ENCODE measurements at regions of chr2 and their contacts with region 1.

Region 1: GRCh38 chr2:219402665-219403515 is 15.2 kb upstream of the DNPEP start:
- DNase-seq: peak; percentile 85
- H3K4me3 Mint-ChIP-seq: no peak overlapping the region
- H3K27ac Mint-ChIP-seq: no peak overlapping the region
- H3K4me1 Mint-ChIP-seq: peaks cover 6% of the 10 kb centered on the region
- H3K27me3 Mint-ChIP-seq: no peaks in the 10 kb centered on the region
- CTCF ChIP-seq: peak; percentile 86

Region 2: GRCh38 chr2:219388127-219388844 is 14.6 kb before region 1 on chr2:
- CTCF ChIA-PET with region 1: interaction called, 23 read pairs
- POLR2A ChIA-PET with region 1: interaction called, 6 read pairs
- intact Hi-C with region 1: no loop called
- DNase-seq: peak; percentile 87
- H3K4me3 Mint-ChIP-seq: peak overlapping the region; percentile 96
- H3K27ac Mint-ChIP-seq: peak overlapping the region; percentile 97
- H3K4me1 Mint-ChIP-seq: no peaks in the 10 kb centered on the region
- H3K27me3 Mint-ChIP-seq: no peaks in the 10 kb centered on the region
- CTCF ChIP-seq: no peak

Region 3: DNA sequence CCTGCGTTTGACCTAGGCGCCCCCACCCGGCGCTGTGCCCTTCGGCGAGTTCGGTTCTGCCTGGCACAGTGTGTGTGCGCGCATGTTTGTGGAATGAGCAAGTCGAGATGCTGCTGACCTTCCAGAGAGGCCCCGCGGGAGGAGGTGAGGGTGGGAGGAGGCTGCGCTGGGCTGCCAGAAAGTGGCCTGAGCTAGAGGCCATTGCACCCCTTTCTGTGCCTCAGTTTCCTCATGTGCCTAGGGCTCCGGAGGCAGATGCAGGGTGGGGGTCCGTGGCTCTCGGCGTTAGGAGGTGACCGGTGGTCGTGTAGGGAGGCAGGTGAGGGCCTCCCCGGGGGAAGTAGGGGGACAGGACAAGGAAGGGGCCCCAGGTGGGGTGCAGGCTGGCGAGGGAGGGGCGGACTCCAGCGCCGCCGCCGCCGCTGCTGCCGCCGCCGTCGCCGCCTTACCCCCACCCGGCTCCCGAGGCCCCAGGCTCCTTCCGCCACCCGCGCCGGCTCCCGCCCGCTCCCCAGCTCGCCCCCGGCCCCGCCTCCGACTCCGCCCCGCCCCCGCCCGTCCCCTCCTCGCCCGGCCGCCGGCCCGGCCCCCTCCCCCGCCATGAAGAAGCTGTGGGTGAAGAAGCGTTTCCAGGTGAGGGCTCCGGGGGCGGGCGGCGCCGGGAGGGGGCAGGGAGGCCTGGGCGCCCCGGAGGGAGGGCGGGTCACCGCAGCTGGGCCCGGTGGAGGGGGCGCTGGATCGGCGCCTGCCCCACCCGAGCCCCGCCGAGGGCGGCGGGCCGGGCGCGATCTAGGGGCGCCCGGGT is 38.8 kb after region 1 on chr2:
- CTCF ChIA-PET with region 1: interaction called, 21 read pairs
- POLR2A ChIA-PET with region 1: no interaction called
- intact Hi-C with region 1: no loop called
- DNase-seq: peak; percentile 48
- H3K4me3 Mint-ChIP-seq: peak overlapping the region; percentile 83
- H3K27ac Mint-ChIP-seq: no peak overlapping the region
- H3K4me1 Mint-ChIP-seq: peaks cover 35% of the 10 kb centered on the region
- H3K27me3 Mint-ChIP-seq: no peaks in the 10 kb centered on the region
- CTCF ChIP-seq: no peak

Region 4: GRCh38 chr2:219475697-219476651 is 73.1 kb after region 1 on chr2:
- CTCF ChIA-PET with region 1: interaction called, 6 read pairs
- POLR2A ChIA-PET with region 1: no interaction called
- intact Hi-C with region 1: loop called (anchors 1 kb)
- DNase-seq: peak; percentile 67
- H3K4me3 Mint-ChIP-seq: no peak overlapping the region
- H3K27ac Mint-ChIP-seq: no peak overlapping the region
- H3K4me1 Mint-ChIP-seq: no peaks in the 10 kb centered on the region
- H3K27me3 Mint-ChIP-seq: no peaks in the 10 kb centered on the region
- CTCF ChIP-seq: peak; percentile 70

Region 5: GRCh38 chr2:219509780-219510511 is 107.1 kb after region 1 on chr2:
- CTCF ChIA-PET with region 1: interaction called, 11 read pairs
- POLR2A ChIA-PET with region 1: interaction called, 4 read pairs
- intact Hi-C with region 1: no loop called
- DNase-seq: peak; percentile 60
- H3K4me3 Mint-ChIP-seq: peak overlapping the region; percentile 38
- H3K27ac Mint-ChIP-seq: no peak overlapping the region
- H3K4me1 Mint-ChIP-seq: peaks cover 11% of the 10 kb centered on the region
- H3K27me3 Mint-ChIP-seq: peaks cover 53% of the 10 kb centered on the region
- CTCF ChIP-seq: peak; percentile 61

Region 6: GRCh38 chr2:219543601-219544358 is 140.9 kb after region 1 on chr2 and contains the starts of genes CHPF and TMEM198:
- CTCF ChIA-PET with region 1: interaction called, 13 read pairs
- POLR2A ChIA-PET with region 1: no interaction called
- intact Hi-C with region 1: no loop called
- DNase-seq: peak; percentile 98
- H3K4me3 Mint-ChIP-seq: peak within 1 kb of the TSS; percentile 75
- H3K27ac Mint-ChIP-seq: peak within 1 kb of the TSS; percentile 57
- H3K4me1 Mint-ChIP-seq: peaks cover 12% of the 10 kb centered on the region
- H3K27me3 Mint-ChIP-seq: no peaks in the 10 kb centered on the region
- CTCF ChIP-seq: no peak
- total RNA-seq, gene CHPF: 81.2 and 105 TPM in 2 replicates
- total RNA-seq, gene TMEM198: 5.3 and 6.3 TPM in 2 replicates

Region 7: DNA sequence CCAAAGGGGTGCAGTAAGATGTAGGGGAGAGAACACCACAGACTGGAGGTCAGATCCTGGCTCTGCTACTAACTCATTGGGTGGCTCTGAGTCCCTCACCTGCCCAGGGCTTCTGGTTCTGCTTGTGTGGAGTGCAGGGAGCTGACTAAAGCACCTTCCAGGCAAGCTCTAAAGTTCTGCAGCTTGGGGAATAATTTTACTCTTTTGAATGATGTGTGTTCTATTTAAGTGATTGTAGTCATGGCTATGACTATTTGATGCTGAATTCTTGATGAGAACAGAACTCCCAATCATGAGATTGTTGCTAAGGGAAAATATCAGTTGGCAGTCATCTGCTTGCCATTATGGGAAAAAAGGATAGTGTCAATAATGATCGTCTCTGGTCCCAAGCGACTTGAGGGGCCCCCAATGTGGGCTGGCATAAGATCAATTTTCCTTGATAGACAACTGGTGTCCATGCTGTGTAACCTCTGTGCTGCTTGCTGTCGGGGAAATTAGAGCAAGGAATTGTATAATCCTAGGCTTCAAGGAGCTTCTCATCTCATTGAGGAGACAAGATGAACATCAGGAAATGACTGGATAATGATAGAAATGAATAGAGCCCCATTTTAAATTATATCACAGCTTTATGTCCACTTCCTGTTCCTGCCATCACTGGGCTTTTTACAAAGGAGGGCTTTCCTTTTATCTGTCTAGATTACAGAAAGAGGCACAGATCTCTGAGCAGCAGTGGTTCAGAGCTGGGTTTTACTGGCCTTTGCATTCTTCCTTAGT is 356.2 kb after region 1 on chr2:
- CTCF ChIA-PET with region 1: no interaction called
- POLR2A ChIA-PET with region 1: no interaction called
- intact Hi-C with region 1: no loop called
- DNase-seq: no peak
- H3K4me3 Mint-ChIP-seq: no peak overlapping the region
- H3K27ac Mint-ChIP-seq: no peak overlapping the region
- H3K4me1 Mint-ChIP-seq: no peaks in the 10 kb centered on the region
- H3K27me3 Mint-ChIP-seq: no peaks in the 10 kb centered on the region
- CTCF ChIP-seq: no peak

Measured in MCF 10A (cell line).